ENCODE measurements at regions of chr17 and their contacts with region 1.

Region 1: DNA sequence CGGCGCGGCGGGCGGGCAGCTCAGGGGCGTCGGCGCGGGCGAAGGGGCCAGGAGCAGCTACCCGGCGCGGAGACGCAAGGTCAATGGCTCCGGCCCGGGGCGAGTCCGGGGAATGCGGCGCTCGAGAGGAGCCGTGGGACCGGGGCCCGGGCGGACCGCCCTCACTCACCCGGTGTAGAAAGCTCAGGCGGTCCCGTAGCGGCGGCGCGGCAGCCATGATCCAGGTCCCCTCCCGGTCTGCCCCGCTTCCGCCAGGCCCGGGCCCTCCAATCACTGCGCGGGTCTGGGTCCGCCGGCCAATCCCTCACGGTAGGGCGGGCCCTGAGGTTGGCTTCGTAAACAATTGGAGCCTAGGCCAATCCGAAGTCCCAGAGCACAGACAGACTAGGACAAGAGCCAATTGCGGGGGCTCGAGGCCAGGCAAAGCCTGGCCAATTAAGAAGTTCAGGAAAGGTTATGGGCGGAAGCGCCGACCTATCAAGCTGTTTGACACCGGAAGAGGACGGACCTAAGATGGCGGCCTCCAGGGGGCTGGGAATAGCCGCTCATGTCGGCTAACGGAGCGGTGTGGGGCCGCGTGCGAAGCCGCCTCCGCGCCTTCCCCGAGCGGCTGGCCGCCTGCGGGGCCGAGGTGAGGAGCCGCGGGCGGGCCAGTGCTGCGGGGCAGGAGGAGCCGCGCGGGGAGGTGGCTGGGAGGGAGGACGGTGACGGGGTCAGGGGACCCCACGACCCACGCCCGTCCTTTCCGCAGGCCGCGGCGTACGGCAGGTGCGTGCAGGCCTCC is at the starts of genes NDUFAF8 and TEPSIN:
- DNase-seq: peak; percentile 98
- ATAC-seq: peak; percentile 96
- H3K4me3 ChIP-seq: peak within 1 kb of the TSS; percentile 93
- H3K27ac ChIP-seq: peak within 1 kb of the TSS; percentile 77
- H3K4me1 ChIP-seq: peaks cover 12% of the 10 kb centered on the region
- H3K27me3 ChIP-seq: no peaks in the 10 kb centered on the region
- CTCF ChIP-seq: no peak
- EP300 ChIP-seq: no peak
- POLR2A ChIP-seq: peak; percentile 79
- RAD21 ChIP-seq: no peak
- polyA plus RNA-seq, gene NDUFAF8: 22.0 to 71.5 TPM
- polyA plus RNA-seq, gene TEPSIN: 0.87 to 1.6 TPM

Region 2: GRCh38 chr17:81018044-81018802 is 220.8 kb before region 1 on chr17:
- CTCF ChIA-PET with region 1: no interaction called
- POLR2A ChIA-PET with region 1: no interaction called
- RAD21 ChIA-PET with region 1: no interaction called
- SMC1A ChIA-PET with region 1: no interaction called
- in situ Hi-C with region 1: loop called (anchors 25 kb)
- intact Hi-C with region 1: no loop called
- DNase-seq: peak; percentile 4
- ATAC-seq: peak; percentile 56
- H3K4me3 ChIP-seq: peak overlapping the region; percentile 24; the same call in 1 of the 2 replicates
- H3K27ac ChIP-seq: no peak overlapping the region
- H3K4me1 ChIP-seq: no peaks in the 10 kb centered on the region
- H3K27me3 ChIP-seq: peaks cover 0 to 2% of the 10 kb centered on the region in 2 experiments; a peak in 1 of 4 replicates
- CTCF ChIP-seq: no peak
- EP300 ChIP-seq: no peak
- POLR2A ChIP-seq: no peak
- RAD21 ChIP-seq: no peak

Region 3: GRCh38 chr17:81101614-81102306 is 137.2 kb before region 1 on chr17:
- CTCF ChIA-PET with region 1: no interaction called
- POLR2A ChIA-PET with region 1: no interaction called
- RAD21 ChIA-PET with region 1: interaction called, 3 read pairs
- SMC1A ChIA-PET with region 1: no interaction called
- in situ Hi-C with region 1: no loop called
- intact Hi-C with region 1: loop called (anchors 1 kb)
- DNase-seq: peak; percentile 13
- ATAC-seq: peak; percentile 99
- H3K4me3 ChIP-seq: no peak overlapping the region
- H3K27ac ChIP-seq: no peak overlapping the region
- H3K4me1 ChIP-seq: no peaks in the 10 kb centered on the region
- H3K27me3 ChIP-seq: no peaks in the 10 kb centered on the region; a peak in 2 of 4 replicates
- CTCF ChIP-seq: peak; percentile 100; a peak in 5 of 6 replicates
- EP300 ChIP-seq: no peak
- POLR2A ChIP-seq: no peak
- RAD21 ChIP-seq: peak; percentile 83

Region 4: GRCh38 chr17:81142301-81143199 is 96.5 kb before region 1 on chr17:
- CTCF ChIA-PET with region 1: interaction called, 17 read pairs
- POLR2A ChIA-PET with region 1: no interaction called
- RAD21 ChIA-PET with region 1: interaction called, 3 read pairs
- SMC1A ChIA-PET with region 1: interaction called, 7 read pairs
- in situ Hi-C with region 1: loop called (anchors 5 kb)
- intact Hi-C with region 1: loop called (anchors 1 kb)
- DNase-seq: peak; percentile 5
- ATAC-seq: peak; percentile 98
- H3K4me3 ChIP-seq: no peak overlapping the region
- H3K27ac ChIP-seq: no peak overlapping the region
- H3K4me1 ChIP-seq: no peaks in the 10 kb centered on the region
- H3K27me3 ChIP-seq: no peaks in the 10 kb centered on the region
- CTCF ChIP-seq: peak; percentile 62 to 76 (median 76)
- EP300 ChIP-seq: no peak
- POLR2A ChIP-seq: no peak
- RAD21 ChIP-seq: peak; percentile 74

Region 5: DNA sequence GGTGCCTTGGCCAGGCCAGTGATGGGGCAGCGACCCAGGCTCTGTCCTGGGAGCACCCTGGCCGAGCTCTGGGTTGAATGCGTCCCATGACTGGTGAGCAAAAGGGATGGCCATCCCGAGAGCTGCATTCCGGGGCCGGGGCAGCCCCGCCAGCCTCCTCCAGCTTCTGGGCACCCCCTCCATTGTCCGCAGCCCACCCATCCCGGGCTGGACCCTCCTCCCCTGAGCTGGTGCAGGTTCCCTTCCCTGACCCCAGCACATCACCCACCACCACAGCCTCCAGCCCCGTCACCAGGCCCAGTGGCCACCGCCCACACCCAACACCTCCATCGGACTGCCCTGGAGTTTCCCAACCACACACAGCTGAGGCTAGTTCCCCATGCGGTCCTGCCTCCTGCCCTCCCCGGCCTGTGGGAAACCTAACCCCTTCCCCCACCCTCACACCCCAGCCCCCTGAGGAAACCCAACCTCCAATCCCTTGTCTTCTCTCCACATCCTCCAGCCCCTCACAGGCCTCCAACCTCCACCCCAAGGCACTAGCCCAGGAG is 89.9 kb before region 1 on chr17:
- CTCF ChIA-PET with region 1: interaction called, 6 read pairs
- POLR2A ChIA-PET with region 1: no interaction called
- RAD21 ChIA-PET with region 1: no interaction called
- SMC1A ChIA-PET with region 1: interaction called, 7 read pairs
- in situ Hi-C with region 1: loop called (anchors 5 kb)
- intact Hi-C with region 1: no loop called
- DNase-seq: no peak
- ATAC-seq: no peak
- H3K4me3 ChIP-seq: no peak overlapping the region
- H3K27ac ChIP-seq: no peak overlapping the region
- H3K4me1 ChIP-seq: no peaks in the 10 kb centered on the region
- H3K27me3 ChIP-seq: no peaks in the 10 kb centered on the region
- CTCF ChIP-seq: no peak
- EP300 ChIP-seq: no peak
- POLR2A ChIP-seq: no peak
- RAD21 ChIP-seq: no peak

Region 6: GRCh38 chr17:81222906-81223761 is 15.9 kb before region 1 on chr17 and contains the start of gene CEP131:
- CTCF ChIA-PET with region 1: interaction called, 5 read pairs
- POLR2A ChIA-PET with region 1: interaction called, 18 read pairs
- RAD21 ChIA-PET with region 1: interaction called, 18 read pairs
- SMC1A ChIA-PET with region 1: interaction called, 6 read pairs
- in situ Hi-C with region 1: no loop called
- intact Hi-C with region 1: no loop called
- DNase-seq: peak; percentile 85
- ATAC-seq: peak; percentile 99
- H3K4me3 ChIP-seq: peak within 1 kb of the TSS; percentile 96
- H3K27ac ChIP-seq: peak within 1 kb of the TSS; percentile 43; the same call in 1 of the 2 replicates
- H3K4me1 ChIP-seq: peaks cover 14% of the 10 kb centered on the region
- H3K27me3 ChIP-seq: no peaks in the 10 kb centered on the region
- CTCF ChIP-seq: no peak
- EP300 ChIP-seq: no peak
- POLR2A ChIP-seq: peak; percentile 46; the same call in 1 of the 2 replicates
- RAD21 ChIP-seq: no peak
- polyA plus RNA-seq, gene CEP131: 0.05 to 0.64 TPM